ENCODE measurements at regions of chr6 and their contacts with region 1.

Region 1: DNA sequence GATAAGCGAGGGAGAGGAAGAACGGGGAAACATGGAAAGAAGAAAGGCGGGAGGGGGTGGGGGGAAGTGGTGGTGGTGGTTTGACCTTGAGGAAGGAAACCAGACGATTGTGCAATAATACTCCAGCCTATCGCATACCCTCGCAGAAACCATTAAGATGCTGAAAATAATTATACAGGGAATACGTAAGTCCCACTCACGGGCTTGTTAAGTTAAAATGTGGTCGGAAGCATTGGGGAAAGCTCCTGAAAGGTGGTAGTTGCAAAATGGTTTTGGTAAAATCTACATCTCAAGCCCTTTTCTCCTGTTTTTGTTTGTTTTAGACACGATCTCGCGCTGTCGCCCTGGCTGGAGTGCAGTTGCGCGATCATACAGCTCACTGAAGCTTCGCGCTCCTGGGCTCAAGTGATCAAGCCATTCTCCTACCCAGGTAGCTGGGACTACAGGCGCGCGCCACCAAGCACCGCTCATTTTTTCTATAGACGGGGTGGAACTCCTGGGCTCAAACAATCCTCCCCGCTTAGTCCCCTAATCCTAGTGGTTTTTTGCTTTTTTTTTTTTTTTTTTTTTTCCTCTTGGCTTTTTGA is 128.9 kb upstream of the ZNF184 start:
- DNase-seq: no peak
- ATAC-seq: no peak
- H3K4me3 ChIP-seq: peak overlapping the region; percentile 10; the same call in 1 of the 2 replicates
- H3K27ac ChIP-seq: no peak overlapping the region
- H3K4me1 ChIP-seq: no peaks in the 10 kb centered on the region
- H3K27me3 ChIP-seq: no peaks in the 10 kb centered on the region
- CTCF ChIP-seq: no peak
- POLR2A ChIP-seq: no peak
- RAD21 ChIP-seq: no peak

Region 2: DNA sequence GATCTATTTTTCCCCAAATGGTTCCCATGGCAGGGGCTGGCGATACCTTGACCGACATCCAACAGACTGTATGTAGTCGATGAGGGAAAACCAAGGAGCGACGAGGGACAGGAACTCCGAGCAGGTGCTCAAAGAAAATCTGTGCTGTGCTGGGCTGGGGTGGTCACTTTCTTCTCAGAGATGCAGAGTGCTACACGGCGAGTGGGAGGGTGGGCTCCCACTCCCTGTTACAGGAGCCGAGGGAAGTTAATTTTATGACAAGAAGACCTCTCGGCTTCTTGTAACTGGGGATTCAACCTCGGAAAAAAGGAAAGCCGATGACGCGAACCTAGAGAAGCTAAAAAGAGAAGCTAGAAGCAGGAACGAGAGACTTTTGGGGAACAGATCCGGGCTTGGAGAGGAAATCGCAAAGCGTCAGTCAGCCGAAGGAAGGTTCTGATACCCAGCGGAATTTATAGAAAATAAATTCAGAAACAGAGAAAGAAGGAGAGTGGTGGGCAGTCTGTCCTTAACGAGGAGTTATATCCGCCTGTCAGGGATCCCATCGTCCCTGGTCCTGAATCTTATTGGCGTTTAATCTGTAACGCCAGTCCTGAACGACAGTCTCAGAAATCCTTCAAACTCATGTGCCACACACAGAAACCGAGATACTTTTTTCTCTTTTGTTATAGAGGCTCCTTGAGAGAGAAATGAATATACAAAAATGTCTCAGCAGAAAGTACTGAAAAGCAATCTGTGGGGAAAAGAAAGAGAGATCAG is 857.6 kb before region 1 on chr6:
- CTCF ChIA-PET with region 1: no interaction called
- POLR2A ChIA-PET with region 1: no interaction called
- dilution Hi-C with region 1: no loop called
- in situ Hi-C with region 1: no loop called
- intact Hi-C with region 1: no loop called
- DNase-seq: no peak
- ATAC-seq: no peak
- H3K4me3 ChIP-seq: peak overlapping the region; percentile 9; the same call in 1 of the 2 replicates
- H3K27ac ChIP-seq: no peak overlapping the region
- H3K4me1 ChIP-seq: no peaks in the 10 kb centered on the region
- H3K27me3 ChIP-seq: peaks cover 11% of the 10 kb centered on the region; the same call in 1 of the 2 replicates
- CTCF ChIP-seq: no peak
- POLR2A ChIP-seq: no peak
- RAD21 ChIP-seq: no peak

Region 3: DNA sequence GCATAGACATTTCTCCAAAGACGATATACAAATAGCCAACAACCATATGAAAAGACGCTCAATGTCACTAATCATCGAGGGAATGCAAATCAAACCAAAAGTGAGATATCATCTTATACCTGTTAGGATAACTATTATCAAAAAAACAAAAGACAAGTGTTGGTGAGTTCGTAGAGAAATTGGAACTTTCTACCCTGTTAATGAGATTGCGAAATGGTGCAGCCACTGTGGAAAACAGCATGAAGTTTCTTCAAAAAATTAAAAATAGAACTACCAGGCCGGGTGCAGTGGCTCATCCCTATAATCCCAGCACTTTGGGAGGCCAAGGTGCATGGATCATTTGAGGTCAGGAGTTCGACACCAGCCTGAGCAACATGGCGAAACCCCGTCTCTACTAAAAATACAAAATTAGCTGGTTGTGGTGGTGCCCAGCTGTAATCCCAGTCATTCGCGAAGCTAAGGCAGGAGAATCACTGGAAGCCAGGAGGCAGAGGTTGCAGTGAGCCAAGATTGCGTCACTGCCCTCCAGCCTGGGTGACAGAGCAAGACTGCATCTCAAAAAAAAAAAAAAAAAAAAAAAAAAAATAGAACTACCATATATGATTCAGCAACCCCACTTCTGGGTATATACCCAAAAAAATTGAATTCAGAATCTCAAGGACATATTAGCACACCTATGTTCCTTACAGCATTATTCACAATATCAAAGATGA is 41.1 kb after region 1 on chr6:
- CTCF ChIA-PET with region 1: no interaction called
- POLR2A ChIA-PET with region 1: interaction called, 14 read pairs
- dilution Hi-C with region 1: no loop called
- in situ Hi-C with region 1: no loop called
- intact Hi-C with region 1: no loop called
- DNase-seq: no peak
- ATAC-seq: no peak
- H3K4me3 ChIP-seq: no peak overlapping the region
- H3K27ac ChIP-seq: no peak overlapping the region
- H3K4me1 ChIP-seq: no peaks in the 10 kb centered on the region
- H3K27me3 ChIP-seq: no peaks in the 10 kb centered on the region
- CTCF ChIP-seq: no peak
- POLR2A ChIP-seq: no peak
- RAD21 ChIP-seq: no peak

Region 4: GRCh38 chr6:27931209-27931608 is 329.4 kb after region 1 on chr6:
- CTCF ChIA-PET with region 1: no interaction called
- POLR2A ChIA-PET with region 1: no interaction called
- dilution Hi-C with region 1: no loop called
- in situ Hi-C with region 1: no loop called
- intact Hi-C with region 1: no loop called
- DNase-seq: no peak
- ATAC-seq: no peak
- H3K4me3 ChIP-seq: no peak overlapping the region
- H3K27ac ChIP-seq: no peak overlapping the region
- H3K4me1 ChIP-seq: no peaks in the 10 kb centered on the region
- H3K27me3 ChIP-seq: no peaks in the 10 kb centered on the region
- CTCF ChIP-seq: no peak
- POLR2A ChIP-seq: no peak
- RAD21 ChIP-seq: no peak

Measured in IMR-90 (cell line).